CD4-positive, alpha-beta T cell (primary cell): ENCODE measurements at regions of chr19 and their contacts with region 1.

Region 1: DNA sequence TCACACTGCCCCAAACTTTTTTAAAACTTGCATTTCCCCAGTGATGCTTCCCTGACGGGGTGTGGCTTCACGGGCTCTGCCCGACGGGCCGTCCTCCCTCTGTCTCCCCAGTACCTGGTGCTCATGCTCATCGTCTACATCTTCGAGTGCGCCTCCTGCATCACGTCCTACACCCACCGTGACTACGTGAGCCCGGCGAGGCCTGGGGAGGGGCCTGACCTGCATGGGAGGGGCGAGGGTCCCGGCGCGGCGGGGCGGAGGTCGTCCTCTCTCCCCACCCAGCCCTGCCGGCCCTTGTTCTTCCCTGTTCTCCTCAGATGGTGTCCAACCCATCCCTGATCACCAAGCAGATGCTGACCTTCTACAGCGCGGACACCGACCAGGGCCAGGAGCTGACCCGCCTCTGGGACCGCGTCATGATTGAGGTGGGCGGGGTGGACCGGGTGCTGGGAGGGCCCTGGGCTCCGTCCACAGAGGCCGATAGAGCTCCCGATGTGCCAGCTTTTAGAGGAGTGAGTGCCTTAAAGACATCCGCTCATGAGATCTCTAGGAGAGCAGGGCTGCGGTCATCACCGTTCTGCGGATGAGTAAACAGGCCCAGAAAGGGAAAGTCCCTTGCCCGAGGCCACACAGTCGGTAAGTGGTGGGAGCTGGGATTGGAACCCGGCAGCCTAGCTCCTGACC is 6.9 kb downstream of the UPK1A start:
- DNase-seq: peak in 12 of 14 experiments; percentile 7 to 69 (median 17)
- ATAC-seq: peak; percentile 79
- H3K4me3 ChIP-seq: peak overlapping the region; percentile 57
- H3K4me3 Mint-ChIP-seq: peak overlapping the region; percentile 65
- H3K27ac ChIP-seq: no peak overlapping the region
- H3K27ac Mint-ChIP-seq: no peak overlapping the region
- H3K4me1 ChIP-seq: peaks cover 12% of the 10 kb centered on the region
- H3K4me1 Mint-ChIP-seq: peaks cover 10% of the 10 kb centered on the region
- H3K27me3 ChIP-seq: peaks cover 11 to 13% of the 10 kb centered on the region in 2 experiments
- H3K27me3 Mint-ChIP-seq: peaks cover 29% of the 10 kb centered on the region
- CTCF ChIP-seq: no peak

Region 2: DNA sequence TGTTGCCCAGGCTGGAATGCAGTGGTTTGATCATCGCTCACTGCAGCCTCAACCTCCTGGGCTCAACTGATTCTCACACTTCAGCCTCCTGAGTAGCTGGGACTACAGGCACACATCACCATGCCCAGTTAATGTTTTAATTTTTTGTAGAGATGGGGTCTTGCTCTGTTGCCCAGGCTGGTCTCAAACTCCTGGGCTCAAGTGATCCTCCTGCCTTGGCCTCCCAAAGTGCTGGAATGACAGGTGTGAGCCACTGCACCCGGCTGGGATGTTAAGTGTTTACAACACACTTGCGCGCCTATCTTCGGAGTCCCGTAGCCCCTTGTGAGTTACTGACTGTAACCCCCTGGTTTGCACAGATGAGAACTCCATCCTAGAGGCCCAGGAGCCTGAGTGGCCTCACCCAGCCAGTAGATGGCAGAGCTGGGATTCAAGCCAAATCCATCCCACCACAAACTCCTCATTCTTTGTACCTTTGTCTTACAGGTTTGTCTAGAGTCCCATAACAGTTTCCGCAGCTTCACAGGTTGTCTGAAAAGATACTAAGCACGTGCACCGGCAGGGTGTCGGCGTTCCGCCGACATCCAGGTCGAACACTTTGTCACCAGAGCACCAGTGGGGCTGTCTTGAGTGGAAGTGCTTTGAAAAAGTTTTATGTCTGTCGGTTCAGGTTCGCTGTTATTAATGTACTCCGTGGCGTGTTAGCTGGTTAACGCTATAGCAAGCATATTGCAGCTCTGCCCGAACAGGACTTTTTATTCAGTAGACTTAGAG is 366.6 kb before region 1 on chr19:
- CTCF ChIA-PET with region 1: no interaction called
- POLR2A ChIA-PET with region 1: no interaction called
- intact Hi-C with region 1: no loop called
- DNase-seq: no peak
- ATAC-seq: no peak
- H3K4me3 ChIP-seq: no peak overlapping the region
- H3K4me3 Mint-ChIP-seq: no peak overlapping the region
- H3K27ac ChIP-seq: no peak overlapping the region
- H3K27ac Mint-ChIP-seq: no peak overlapping the region
- H3K4me1 ChIP-seq: no peaks in the 10 kb centered on the region
- H3K4me1 Mint-ChIP-seq: no peaks in the 10 kb centered on the region
- H3K27me3 ChIP-seq: no peaks in the 10 kb centered on the region
- H3K27me3 Mint-ChIP-seq: no peaks in the 10 kb centered on the region
- CTCF ChIP-seq: no peak

Region 3: GRCh38 chr19:35569281-35569781 is 103.9 kb before region 1 on chr19:
- CTCF ChIA-PET with region 1: no interaction called
- POLR2A ChIA-PET with region 1: no interaction called
- intact Hi-C with region 1: loop called in 1 of 2 experiments (anchors 10 kb)
- DNase-seq: no peak
- ATAC-seq: no peak
- H3K4me3 ChIP-seq: no peak overlapping the region
- H3K4me3 Mint-ChIP-seq: no peak overlapping the region
- H3K27ac ChIP-seq: no peak overlapping the region
- H3K27ac Mint-ChIP-seq: no peak overlapping the region
- H3K4me1 ChIP-seq: no peaks in the 10 kb centered on the region
- H3K4me1 Mint-ChIP-seq: no peaks in the 10 kb centered on the region
- H3K27me3 ChIP-seq: peaks cover 0 to 7% of the 10 kb centered on the region in 2 experiments
- H3K27me3 Mint-ChIP-seq: peaks cover 65% of the 10 kb centered on the region
- CTCF ChIP-seq: no peak